Right ventricle myocardium superior (tissue), 1 donor: ENCODE measurements at regions of chr1 and their contacts with region 1.

Region 1: DNA sequence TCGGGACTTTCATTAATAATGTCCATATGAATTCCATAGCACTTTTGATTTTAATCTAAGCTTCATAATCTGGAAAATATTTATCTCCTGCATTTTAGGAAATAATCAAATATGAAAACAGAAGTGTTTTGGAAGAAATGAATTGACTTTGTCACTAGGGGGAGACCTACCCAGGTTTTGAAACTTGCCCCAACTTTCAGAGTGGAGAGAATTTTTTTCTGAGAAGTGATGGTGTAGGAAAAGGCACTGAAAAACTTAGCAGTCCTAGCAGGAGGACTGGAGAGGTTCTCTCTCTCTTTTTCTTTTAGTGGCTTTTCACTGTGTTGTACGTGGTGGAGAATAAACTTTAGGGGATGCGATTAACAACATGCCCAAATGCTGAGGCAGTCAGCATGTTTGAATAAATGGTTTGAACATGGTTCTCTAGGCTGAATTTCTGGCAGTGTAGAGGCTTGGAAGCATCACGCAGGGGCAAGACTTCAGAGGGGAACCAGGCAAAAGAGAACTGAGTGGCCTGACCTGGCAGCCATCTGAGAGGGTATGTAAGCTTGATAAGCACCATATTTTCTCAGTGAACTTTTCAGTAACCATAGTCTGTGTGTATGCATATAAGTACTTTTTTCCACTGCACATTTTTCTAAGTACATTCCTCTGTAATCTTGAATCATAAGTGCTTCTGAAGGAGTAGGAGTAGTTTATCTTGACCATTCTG is 68.3 kb upstream of the NEK7 start:
- DNase-seq: no peak
- ATAC-seq: peak; percentile 53

Region 2: DNA sequence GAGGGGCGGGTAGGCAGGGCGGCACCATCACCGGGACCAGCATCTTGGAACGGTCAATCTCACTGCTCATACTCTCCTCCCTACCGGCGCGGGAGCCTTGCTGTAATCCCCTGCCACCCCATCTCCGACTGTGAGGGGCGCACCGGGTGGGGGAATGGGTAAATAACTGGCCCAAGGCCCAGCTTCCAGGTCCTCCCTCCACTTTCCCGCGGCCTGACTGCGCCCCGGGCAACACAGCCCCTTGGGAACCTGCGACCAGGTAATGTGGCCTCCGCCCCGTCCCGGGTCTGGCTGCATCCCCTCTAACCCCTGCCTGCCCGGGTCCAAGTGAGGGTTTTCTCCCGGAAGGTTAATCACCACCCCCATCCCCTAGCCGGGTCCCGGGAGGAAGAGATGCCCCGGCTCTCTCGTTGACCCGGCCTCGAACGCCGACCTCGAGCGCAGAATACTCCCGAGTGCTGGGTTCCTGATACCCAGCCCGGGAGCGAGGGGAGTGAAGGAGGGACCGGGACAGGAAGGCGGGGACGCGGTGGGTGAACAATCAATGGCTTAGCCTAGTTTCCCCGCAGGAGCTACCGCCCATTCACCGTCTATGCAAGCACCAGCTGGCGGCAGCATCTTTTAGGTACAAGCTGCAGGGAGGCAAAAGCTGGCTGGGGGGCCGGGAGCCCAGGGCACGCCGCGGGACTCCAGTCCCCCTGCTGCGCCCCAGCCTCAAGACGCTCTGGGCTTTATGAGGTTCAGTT is 177.2 kb before region 1 on chr1:
- intact Hi-C with region 1: no loop called
- DNase-seq: no peak
- ATAC-seq: no peak

Region 3: DNA sequence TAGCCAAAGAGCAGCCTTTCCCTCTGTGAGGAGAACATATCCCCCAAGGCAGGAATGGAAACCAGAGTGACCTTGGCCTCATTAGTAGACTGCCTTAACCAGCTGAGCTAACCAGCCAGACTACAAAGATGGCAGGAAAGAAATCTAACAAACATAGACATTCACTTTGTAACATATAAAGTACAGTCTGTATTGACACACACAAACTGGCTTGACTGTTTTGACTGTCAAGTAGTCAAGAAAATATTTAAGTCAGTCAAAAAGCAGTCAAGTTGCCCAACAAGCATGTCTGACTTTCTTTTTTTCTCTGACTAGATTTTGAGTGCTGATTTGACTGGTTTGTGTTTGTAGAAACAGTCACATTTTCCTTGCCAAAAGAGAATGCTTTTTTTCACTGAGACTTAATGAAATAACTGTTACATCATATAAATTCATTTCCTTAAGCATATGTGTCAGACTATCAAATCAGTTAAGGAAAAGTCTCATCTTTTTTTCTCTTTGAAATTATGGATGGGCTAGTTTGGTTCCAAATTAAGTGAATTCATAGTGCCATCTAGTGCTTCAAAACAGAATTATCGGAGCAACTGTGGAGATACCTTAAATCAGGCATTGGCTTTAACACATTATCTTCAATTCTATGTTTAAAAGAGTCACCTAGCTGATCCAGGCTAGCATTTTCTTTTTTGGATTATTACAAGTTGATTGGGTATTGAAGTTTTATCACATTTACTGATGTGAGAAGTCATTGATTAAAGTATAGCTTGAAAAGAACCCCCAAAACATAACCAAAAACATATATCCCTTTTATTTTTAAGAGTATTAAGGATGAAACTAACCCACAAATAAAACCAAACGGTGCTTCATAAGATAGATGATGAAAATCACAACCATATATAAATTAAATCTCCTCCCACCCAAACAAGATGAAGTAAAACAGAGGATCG is 377.0 kb after region 1 on chr1:
- intact Hi-C with region 1: loop called (anchors 10 kb)
- DNase-seq: no peak
- ATAC-seq: peak; percentile 57